Caco-2 (cell line): ENCODE measurements at regions of chr1 and their contacts with region 1.

Region 1: GRCh38 chr1:185733818-185734771 is at the start of gene HMCN1:
- DNase-seq: peak; percentile 53 to 60
- H3K4me3 ChIP-seq: peak within 1 kb of the TSS; percentile 33
- H3K4me3 Mint-ChIP-seq: peak within 1 kb of the TSS; percentile 67
- H3K27ac Mint-ChIP-seq: no peak within 1 kb of the TSS
- H3K4me1 ChIP-seq: no peaks in the 10 kb centered on the region
- H3K4me1 Mint-ChIP-seq: peaks cover 8% of the 10 kb centered on the region
- H3K27me3 ChIP-seq: no peaks in the 10 kb centered on the region; the same call in 1 of the 2 replicates
- H3K27me3 Mint-ChIP-seq: peaks cover 28% of the 10 kb centered on the region
- CTCF ChIP-seq: peak; percentile 24 to 63
- total RNA-seq, gene HMCN1: 0.02 and 0.49 TPM in 2 replicates

Region 2: DNA sequence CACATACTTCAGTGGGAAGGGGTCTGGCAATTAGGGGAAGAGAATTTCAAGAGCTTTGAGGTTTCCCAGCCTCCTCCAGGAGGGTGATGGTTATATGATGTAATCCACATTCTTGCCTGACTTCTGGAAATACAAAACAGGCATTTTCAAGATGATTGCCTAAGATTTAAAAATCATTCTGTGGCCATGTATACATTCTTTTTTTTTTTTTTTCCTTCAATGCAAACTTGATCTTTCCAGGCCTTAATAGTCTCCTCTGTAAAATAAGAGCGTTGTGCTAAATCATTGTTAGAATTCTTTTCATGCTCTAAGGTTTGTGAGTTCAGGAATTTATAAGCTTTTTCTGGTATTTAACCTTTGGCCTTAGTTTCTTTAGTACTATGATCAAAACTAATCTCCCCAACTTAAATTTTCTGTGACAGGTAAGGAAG is 192.2 kb before region 1 on chr1:
- CTCF ChIA-PET with region 1: no interaction called
- POLR2A ChIA-PET with region 1: no interaction called
- intact Hi-C with region 1: no loop called
- DNase-seq: peak in 1 of 2 experiments; percentile 40
- H3K4me3 ChIP-seq: no peak overlapping the region
- H3K4me3 Mint-ChIP-seq: peak overlapping the region; percentile 44
- H3K27ac Mint-ChIP-seq: peak overlapping the region; percentile 83
- H3K4me1 ChIP-seq: peaks cover 41% of the 10 kb centered on the region
- H3K4me1 Mint-ChIP-seq: peaks cover 39% of the 10 kb centered on the region
- H3K27me3 ChIP-seq: no peaks in the 10 kb centered on the region
- H3K27me3 Mint-ChIP-seq: no peaks in the 10 kb centered on the region
- CTCF ChIP-seq: no peak

Region 3: DNA sequence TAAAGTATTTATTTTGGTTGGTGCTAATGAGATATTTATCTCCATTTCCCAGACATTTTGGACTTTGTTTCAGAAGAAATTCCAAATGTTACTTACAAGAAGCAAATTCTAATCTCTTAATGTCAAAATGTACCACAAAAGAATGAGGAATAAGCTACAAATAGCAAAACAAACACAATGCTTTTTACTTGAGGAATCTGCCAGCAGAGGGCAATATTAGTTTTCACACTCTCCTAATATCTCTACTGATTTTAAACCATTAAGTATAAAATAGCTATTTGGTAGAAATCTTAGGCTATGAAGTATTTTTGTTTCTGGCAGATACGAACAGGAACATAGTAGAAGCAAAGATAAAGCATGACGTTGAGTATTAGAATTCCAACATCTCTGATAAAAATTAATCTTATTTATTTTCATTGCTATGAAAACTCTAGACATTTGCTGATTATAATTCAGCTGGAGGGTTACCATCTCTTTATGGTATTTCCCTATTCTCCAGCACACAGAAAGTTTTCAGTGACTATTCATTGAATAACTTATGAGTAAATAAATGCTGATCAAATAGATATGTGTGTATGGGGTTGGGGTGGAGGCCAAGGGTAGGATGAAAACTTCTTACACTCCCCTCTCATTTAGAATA is 13.3 kb before region 1 on chr1:
- CTCF ChIA-PET with region 1: interaction called, 15 read pairs
- POLR2A ChIA-PET with region 1: no interaction called
- intact Hi-C with region 1: loop called (anchors 2 kb)
- DNase-seq: peak in 1 of 2 experiments; percentile 14
- H3K4me3 ChIP-seq: no peak overlapping the region
- H3K4me3 Mint-ChIP-seq: no peak overlapping the region
- H3K27ac Mint-ChIP-seq: no peak overlapping the region
- H3K4me1 ChIP-seq: no peaks in the 10 kb centered on the region
- H3K4me1 Mint-ChIP-seq: no peaks in the 10 kb centered on the region
- H3K27me3 ChIP-seq: no peaks in the 10 kb centered on the region
- H3K27me3 Mint-ChIP-seq: peaks cover 4% of the 10 kb centered on the region
- CTCF ChIP-seq: peak; percentile 40 to 45